ENCODE measurements at regions of chr4 and their contacts with region 1.

Region 1: DNA sequence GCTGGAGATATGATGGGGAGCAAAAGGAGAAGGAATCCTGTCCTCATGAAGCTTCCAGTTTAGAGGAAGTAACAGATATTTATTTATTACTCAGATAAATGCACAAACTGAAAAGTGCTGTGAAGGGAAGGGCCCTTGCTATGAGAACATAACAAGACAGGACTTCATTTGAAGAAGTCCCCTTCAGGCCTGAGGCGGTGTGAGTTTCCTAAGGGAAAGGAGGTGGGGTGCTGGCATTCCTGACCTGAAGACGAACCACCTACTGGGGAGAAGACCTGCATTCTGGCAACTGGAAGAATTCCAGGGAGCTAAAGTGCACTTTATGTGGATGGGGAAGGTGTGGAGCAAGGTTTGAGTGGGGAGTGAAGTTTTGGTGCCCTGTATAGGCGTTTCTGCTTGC is 15.9 kb upstream of the SPARCL1 start:
- DNase-seq: no peak
- H3K4me3 ChIP-seq: no peak overlapping the region
- H3K27ac ChIP-seq: no peak overlapping the region
- H3K4me1 ChIP-seq: peaks cover 4% of the 10 kb centered on the region
- H3K27me3 ChIP-seq: no peaks in the 10 kb centered on the region
- CTCF ChIP-seq: no peak
- POLR2A ChIP-seq: no peak

Region 2: DNA sequence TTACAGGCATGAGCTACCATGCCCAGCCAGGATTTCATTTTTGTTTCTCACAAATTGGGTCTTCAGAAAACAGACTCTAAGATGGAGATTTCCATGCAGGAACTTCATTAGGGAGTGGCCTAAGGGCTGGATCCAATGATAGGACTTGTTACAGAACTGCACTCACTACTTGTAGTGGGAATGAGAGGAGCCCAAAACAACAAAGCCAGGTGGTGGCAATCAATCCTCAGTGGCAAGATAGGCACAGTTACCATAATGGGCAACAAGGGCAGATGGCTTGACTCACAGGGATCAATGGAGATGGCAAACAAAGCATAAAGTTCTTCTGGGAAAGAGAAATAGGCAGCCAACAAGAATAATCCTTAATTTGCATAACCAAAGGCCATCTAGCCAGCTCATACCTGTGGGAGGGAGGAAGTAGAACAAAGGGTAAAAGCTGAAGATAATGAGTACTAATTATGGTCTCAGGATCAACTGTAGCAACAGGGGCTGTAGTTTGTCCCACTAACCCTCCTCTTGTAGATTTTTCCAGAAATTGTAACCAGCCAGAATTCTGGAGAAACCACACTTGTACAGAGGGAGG is 1112.4 kb before region 1 on chr4:
- intact Hi-C with region 1: no loop called
- DNase-seq: no peak
- H3K4me3 ChIP-seq: no peak overlapping the region
- H3K27ac ChIP-seq: no peak overlapping the region
- H3K4me1 ChIP-seq: no peaks in the 10 kb centered on the region
- H3K27me3 ChIP-seq: no peaks in the 10 kb centered on the region
- CTCF ChIP-seq: no peak
- POLR2A ChIP-seq: no peak

Region 3: GRCh38 chr4:87838890-87839591 is 294.0 kb after region 1 on chr4:
- intact Hi-C with region 1: loop called (anchors 5 kb)
- DNase-seq: peak; percentile 57
- H3K4me3 ChIP-seq: no peak overlapping the region
- H3K27ac ChIP-seq: no peak overlapping the region
- H3K4me1 ChIP-seq: no peaks in the 10 kb centered on the region
- H3K27me3 ChIP-seq: no peaks in the 10 kb centered on the region
- CTCF ChIP-seq: peak; percentile 57 to 88 (median 79)
- POLR2A ChIP-seq: no peak

Measured in testis (tissue), 5 donors.